Heart left ventricle (tissue), 16 donors: ENCODE measurements at regions of chr10 and their contacts with region 1.

Region 1: DNA sequence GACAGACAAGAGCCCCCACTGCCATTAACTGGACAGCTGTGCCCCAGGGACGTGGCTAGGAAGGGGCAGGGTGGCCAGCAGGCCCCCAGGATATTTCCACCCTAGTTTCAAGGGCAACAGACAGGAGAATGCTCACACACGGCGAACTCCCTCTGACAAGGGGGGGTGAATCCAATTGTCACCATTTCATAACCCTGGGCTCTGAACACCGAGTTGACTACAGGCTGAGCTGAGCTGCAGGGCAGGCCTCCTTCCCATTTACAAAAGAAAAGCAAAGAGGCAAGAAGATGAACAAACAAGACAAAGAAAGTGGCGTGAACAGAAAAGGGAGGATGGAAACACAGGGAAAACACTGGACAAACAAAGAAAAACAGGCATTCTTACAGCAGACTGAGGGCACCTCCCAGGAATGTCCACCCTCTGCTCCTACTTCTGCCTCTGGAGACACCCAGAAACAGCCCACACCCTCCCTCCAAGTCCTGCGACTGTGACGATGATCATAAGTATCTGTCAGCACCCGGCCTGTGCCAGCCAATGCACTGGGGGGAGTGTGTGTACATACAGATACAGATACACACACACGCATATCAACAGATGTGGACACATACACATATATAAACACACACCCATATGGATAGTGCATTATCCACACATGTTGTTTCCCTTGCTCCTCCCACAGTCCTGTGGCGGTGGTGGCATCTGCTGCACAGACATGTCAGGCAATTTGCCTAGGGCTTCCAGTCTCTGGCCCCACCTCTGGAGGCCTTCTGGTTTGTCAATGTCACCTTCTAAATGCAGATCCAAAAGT is 66.2 kb downstream of the FAM53B start:
- DNase-seq: peak in 2 of 5 donors; percentile 79 to 81
- ATAC-seq: peak; percentile 77 to 83 (median 78)
- H3K4me3 ChIP-seq: peak overlapping the region in 6 of 12 donors; percentile 17 to 35 (median 26)
- H3K27ac ChIP-seq: peak overlapping the region; percentile 62 to 92 (median 84)
- H3K4me1 ChIP-seq: peaks cover 25 to 99% (median 80%) of the 10 kb centered on the region in 12 donors
- H3K27me3 ChIP-seq: no peaks in the 10 kb centered on the region
- CTCF ChIP-seq: no peak
- POLR2A ChIP-seq: peak in 1 of 2 donors; percentile 14

Region 2: DNA sequence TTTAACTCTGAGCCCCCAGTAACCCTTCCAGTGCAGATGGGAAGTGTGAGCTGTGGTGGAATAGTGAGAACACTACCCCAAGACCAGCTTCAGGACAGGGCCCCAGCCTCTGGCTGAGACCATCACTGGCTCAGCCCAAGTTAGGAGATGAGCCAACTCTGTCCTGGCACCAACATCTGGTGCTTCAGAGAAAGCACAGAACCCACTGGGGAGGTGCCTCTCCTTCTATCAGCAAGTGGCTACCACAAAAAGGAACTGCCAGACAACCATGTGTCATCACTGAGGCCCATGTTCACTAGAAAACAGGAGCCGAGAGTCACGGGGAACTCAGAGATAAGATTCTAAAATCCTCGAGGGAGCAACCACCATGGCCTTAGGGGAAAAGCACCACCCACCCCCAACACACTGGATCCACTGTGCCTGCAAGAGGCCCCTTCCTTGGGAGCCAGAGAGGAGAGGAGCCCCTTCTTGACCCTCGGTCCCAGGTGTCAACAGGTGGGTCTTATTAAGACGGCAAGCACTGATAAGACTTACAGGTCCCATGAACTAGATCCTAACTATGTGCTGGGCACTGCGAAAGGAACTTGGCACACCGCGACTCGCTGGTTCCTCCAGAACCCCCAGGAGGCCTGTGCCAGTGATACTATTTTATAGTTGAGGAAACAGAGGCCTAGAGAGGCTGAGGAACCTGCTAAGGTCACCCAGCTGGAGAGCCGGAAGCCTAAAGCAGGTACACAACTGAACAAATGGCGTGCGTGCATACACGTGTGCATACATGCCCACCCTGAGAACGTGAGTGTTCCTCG is 36.5 kb before region 1 on chr10:
- intact Hi-C with region 1: loop called in 6 of 10 experiments (anchors 5 kb)
- DNase-seq: peak in 4 of 5 donors; percentile 71 to 84 (median 80)
- ATAC-seq: peak; percentile 73 to 80 (median 80)
- H3K4me3 ChIP-seq: peak overlapping the region in 2 of 12 donors; percentile 10 to 14
- H3K27ac ChIP-seq: peak overlapping the region; percentile 48 to 93 (median 79)
- H3K4me1 ChIP-seq: peaks cover 11 to 100% (median 83%) of the 10 kb centered on the region in 12 donors
- H3K27me3 ChIP-seq: no peaks in the 10 kb centered on the region
- CTCF ChIP-seq: no peak
- POLR2A ChIP-seq: no peak

Region 3: DNA sequence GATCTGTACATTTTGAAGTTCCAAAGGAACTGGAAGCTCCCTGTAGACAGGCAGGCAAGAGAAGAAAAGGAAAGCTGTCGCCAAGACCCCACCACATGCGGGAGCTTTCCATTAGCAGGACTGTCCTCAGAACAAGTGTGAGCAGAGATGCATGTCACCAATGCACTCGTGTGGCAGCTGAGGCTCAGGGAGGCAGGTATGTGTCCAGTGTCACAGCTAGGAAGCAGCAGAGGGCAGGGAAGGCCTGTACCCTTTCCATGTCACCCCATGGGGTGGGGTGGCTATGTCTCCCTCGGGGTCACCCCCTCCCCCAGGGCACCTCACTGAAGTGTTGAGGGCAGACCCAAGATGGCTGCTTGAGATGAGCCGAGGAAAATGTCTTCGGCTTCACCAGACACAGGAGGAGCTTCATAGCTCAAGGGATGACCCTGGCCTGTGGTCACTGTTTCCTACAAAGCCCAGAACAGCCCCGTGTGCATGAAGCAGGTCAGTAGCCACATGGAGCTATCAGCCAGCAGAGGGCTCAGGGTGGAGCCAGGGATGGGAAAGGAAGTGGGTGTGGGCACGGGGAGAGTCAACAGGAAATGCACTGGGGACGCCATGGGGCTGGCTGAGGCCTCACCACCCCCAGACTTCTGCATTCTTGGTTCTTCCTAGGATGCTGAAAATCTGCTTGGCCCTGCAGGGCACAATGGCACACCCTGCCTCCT is 30.4 kb before region 1 on chr10:
- intact Hi-C with region 1: loop called in 6 of 10 experiments (anchors 5 kb)
- DNase-seq: peak; percentile 75 to 88 (median 84)
- ATAC-seq: peak; percentile 34 to 67 (median 56)
- H3K4me3 ChIP-seq: peak overlapping the region in 1 of 12 donors; percentile 7
- H3K27ac ChIP-seq: peak overlapping the region; percentile 33 to 97 (median 75)
- H3K4me1 ChIP-seq: peaks cover 44 to 100% (median 94%) of the 10 kb centered on the region in 12 donors
- H3K27me3 ChIP-seq: no peaks in the 10 kb centered on the region
- CTCF ChIP-seq: peak in 10 of 12 donors; percentile 11 to 50 (median 28)
- POLR2A ChIP-seq: no peak